Activated T-helper 2 cell treated with anti-CD3 and anti-CD28 coated beads, Interferon-gamma antibody, Interleukin-2, Interleukin-4, amounts not matched to agents 10 μg/mL and 5 μg/mL and 100 μg/mL, durations not matched to agents 14 hours and 24 hours and 36 hours (primary cell): ENCODE measurements at regions of chr9 and their contacts with region 1.

Region 1: DNA sequence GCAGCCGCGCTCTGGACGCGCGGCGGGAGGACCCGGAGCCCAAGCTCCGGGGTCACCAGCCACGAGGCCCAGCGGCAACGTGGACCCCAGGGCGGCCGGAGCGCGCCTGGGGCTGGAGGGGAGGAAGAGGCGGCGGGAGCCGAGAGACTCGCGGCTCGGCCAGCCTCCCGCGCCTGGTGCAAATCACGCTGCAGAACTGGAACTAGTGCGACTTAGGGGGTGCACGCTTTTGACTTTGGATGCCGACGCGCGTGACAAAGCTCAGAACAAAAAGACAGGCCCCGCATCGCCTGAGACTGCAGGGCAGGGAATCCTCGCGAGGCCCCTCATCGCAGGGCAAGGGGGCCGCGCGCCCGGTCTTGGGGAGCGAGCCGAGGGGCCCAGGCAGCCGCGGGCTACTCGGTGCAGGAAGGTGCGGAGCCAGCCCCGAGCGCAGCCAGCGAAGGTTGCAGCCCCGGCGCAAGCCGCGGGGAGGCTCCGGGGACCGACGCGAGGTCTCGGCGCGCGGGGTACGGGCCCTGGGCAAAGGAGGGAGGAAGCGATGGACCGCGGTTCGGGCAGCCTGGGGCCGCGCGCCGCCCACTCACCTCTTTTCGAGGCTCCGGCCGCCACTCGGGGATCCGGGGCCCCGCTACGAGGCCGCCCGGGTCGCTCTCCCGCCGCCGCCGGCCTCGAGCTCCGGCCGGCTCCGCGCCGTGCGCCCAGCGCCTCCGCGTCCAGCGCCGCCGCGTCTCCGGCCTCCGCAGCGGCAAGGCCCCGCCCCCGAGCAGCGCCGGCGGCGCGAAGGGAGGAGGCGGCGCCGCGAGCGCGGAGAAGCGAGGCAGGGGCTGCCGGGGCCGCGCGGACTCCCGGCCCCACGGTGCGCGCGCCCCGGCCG is at the start of gene GOLM1:
- DNase-seq: peak; percentile 19
- H3K4me3 Mint-ChIP-seq: peak within 1 kb of the TSS; percentile 87
- H3K27ac Mint-ChIP-seq: peak within 1 kb of the TSS; percentile 88
- H3K4me1 Mint-ChIP-seq: peaks cover 12% of the 10 kb centered on the region
- H3K27me3 Mint-ChIP-seq: peaks cover 51% of the 10 kb centered on the region
- total RNA-seq, gene GOLM1: 7.9 and 11.5 TPM in 2 replicates

Region 2: GRCh38 chr9:85940832-85941621 is 158.0 kb before region 1 on chr9 and contains the start of gene NAA35:
- intact Hi-C with region 1: loop called (anchors 5 kb)
- DNase-seq: peak; percentile 99
- H3K4me3 Mint-ChIP-seq: no peak within 1 kb of the TSS
- H3K27ac Mint-ChIP-seq: peak within 1 kb of the TSS; percentile 93
- H3K4me1 Mint-ChIP-seq: peaks cover 7% of the 10 kb centered on the region
- H3K27me3 Mint-ChIP-seq: no peaks in the 10 kb centered on the region
- total RNA-seq, gene NAA35: 31.3 and 33.6 TPM in 2 replicates

Region 3: GRCh38 chr9:86246752-86247161 is 147.7 kb after region 1 on chr9:
- intact Hi-C with region 1: loop called (anchors 10 kb)
- DNase-seq: no peak
- H3K4me3 Mint-ChIP-seq: no peak overlapping the region
- H3K27ac Mint-ChIP-seq: no peak overlapping the region
- H3K4me1 Mint-ChIP-seq: peaks cover 3% of the 10 kb centered on the region
- H3K27me3 Mint-ChIP-seq: peaks cover 2% of the 10 kb centered on the region

Region 4: GRCh38 chr9:86282077-86282978 is 183.3 kb after region 1 on chr9 and contains the start of gene ISCA1:
- intact Hi-C with region 1: loop called (anchors 2 kb)
- DNase-seq: peak; percentile 92
- H3K4me3 Mint-ChIP-seq: peak within 1 kb of the TSS; percentile 95
- H3K27ac Mint-ChIP-seq: peak within 1 kb of the TSS; percentile 99
- H3K4me1 Mint-ChIP-seq: peaks cover 36% of the 10 kb centered on the region
- H3K27me3 Mint-ChIP-seq: no peaks in the 10 kb centered on the region
- total RNA-seq, gene ISCA1: 28.5 and 28.9 TPM in 2 replicates